ENCODE measurements at regions of chr15 and their contacts with region 1.

Region 1: DNA sequence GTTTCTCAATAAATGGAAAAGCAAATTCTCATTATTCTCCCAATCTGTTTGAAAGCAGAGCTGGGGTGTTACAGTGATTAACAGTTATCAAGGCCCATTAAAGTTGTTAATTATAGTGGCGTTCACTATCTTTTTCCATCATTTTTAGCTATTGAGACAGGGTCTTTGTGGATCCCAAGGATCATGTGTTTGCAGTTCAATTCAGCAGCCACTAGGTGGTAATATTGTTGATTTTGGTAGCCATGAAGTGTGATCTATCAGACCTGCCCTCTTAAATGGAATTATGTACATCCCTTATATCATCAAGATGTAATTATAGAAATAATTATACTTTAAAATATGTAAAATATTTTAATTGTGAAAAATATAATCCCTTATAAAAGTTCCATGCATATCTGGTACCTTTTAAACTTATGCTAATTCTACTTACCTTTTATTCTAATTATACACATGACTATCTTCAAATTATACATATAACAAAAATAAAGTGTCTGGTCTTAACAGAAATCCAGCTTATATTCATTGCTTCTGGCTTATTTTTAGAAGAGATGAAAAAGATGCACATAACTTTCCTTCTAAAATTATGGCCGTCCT is 126.4 kb downstream of the GREM1 start:
- DNase-seq: peak in 1 of 2 experiments; percentile 24
- H3K4me3 ChIP-seq: no peak overlapping the region
- H3K4me3 Mint-ChIP-seq: no peak overlapping the region
- H3K27ac Mint-ChIP-seq: no peak overlapping the region
- H3K4me1 ChIP-seq: no peaks in the 10 kb centered on the region
- H3K4me1 Mint-ChIP-seq: no peaks in the 10 kb centered on the region
- H3K27me3 ChIP-seq: no peaks in the 10 kb centered on the region
- H3K27me3 Mint-ChIP-seq: peaks cover 6% of the 10 kb centered on the region
- CTCF ChIP-seq: peak; percentile 62 to 81

Region 2: GRCh38 chr15:32683906-32684584 is 160.2 kb before region 1 on chr15:
- CTCF ChIA-PET with region 1: no interaction called
- POLR2A ChIA-PET with region 1: no interaction called
- intact Hi-C with region 1: no loop called
- DNase-seq: no peak
- H3K4me3 ChIP-seq: no peak overlapping the region
- H3K4me3 Mint-ChIP-seq: no peak overlapping the region
- H3K27ac Mint-ChIP-seq: no peak overlapping the region
- H3K4me1 ChIP-seq: no peaks in the 10 kb centered on the region
- H3K4me1 Mint-ChIP-seq: no peaks in the 10 kb centered on the region
- H3K27me3 ChIP-seq: no peaks in the 10 kb centered on the region
- H3K27me3 Mint-ChIP-seq: no peaks in the 10 kb centered on the region
- CTCF ChIP-seq: no peak

Region 3: DNA sequence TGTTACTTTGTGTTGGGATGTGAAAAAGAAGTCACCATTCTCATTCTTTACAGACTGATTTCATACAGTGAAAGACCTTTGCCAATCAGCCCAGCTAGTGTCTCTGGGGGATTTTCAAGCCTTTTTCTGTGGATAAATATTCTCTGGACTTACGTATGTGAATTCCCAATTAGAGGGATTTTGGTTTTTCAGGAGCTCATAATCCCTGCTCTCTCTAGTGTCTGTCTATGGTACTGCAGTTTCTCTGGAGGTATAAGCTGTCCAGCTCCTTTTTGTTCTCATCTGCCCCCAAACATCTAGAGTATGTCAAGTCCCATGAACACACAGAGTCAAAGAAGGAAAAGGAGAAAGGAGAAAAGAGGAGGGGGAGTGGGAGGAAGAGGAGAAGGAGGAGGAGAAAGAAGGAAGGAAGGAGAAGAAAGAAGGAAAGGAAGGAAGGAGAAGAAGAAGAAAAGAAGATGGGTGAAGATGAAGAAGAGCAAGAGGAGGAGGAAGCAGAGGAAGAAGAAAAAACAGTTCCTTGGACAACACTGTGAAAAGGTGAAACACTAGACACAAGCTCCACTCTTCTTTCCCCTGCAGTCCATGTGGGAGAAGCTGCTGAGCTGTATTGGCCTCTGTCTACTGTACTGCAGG is 92.2 kb after region 1 on chr15:
- CTCF ChIA-PET with region 1: interaction called, 25 read pairs
- POLR2A ChIA-PET with region 1: no interaction called
- intact Hi-C with region 1: loop called (anchors 2 kb)
- DNase-seq: peak in 1 of 2 experiments; percentile 24
- H3K4me3 ChIP-seq: no peak overlapping the region
- H3K4me3 Mint-ChIP-seq: no peak overlapping the region
- H3K27ac Mint-ChIP-seq: no peak overlapping the region
- H3K4me1 ChIP-seq: no peaks in the 10 kb centered on the region
- H3K4me1 Mint-ChIP-seq: no peaks in the 10 kb centered on the region
- H3K27me3 ChIP-seq: no peaks in the 10 kb centered on the region; the same call in 1 of the 2 replicates
- H3K27me3 Mint-ChIP-seq: peaks cover 7% of the 10 kb centered on the region
- CTCF ChIP-seq: peak; percentile 53 to 58

Region 4: GRCh38 chr15:32994810-32995424 is 150.7 kb after region 1 on chr15:
- CTCF ChIA-PET with region 1: no interaction called
- POLR2A ChIA-PET with region 1: no interaction called
- intact Hi-C with region 1: loop called (anchors 2 kb)
- DNase-seq: peak in 1 of 2 experiments; percentile 9
- H3K4me3 ChIP-seq: no peak overlapping the region
- H3K4me3 Mint-ChIP-seq: no peak overlapping the region
- H3K27ac Mint-ChIP-seq: no peak overlapping the region
- H3K4me1 ChIP-seq: no peaks in the 10 kb centered on the region
- H3K4me1 Mint-ChIP-seq: no peaks in the 10 kb centered on the region
- H3K27me3 ChIP-seq: no peaks in the 10 kb centered on the region
- H3K27me3 Mint-ChIP-seq: peaks cover 14% of the 10 kb centered on the region
- CTCF ChIP-seq: peak; percentile 36 to 38

Region 5: DNA sequence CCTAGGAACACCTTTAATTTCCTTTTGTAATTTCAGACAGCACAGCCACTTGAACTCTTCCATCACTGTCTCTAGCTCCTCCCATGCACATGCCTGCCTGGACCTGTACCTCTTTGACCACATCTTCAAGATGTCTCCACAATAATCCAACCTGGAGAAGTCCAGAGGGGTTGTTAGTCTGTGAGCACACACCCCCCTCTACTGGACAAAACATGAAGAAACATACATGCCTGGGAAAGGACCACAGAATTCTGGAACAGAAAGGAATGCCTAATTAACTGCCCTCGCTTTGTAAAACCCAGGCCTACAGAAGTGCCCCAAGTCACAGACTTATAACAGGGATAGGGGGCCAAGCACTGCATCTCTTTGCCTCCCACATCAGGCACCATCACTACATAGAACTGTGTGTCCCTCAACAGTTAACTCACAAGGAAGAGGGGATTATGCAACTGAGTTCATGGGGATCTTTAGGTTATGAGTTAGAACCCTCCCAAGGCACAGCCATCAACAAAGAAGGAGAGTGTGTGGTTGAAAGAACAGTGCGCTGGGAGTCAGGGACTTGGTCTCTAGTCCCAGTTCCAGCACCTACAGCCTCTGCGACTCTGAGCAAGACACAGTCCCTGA is 288.6 kb after region 1 on chr15:
- CTCF ChIA-PET with region 1: interaction called, 3 read pairs
- POLR2A ChIA-PET with region 1: no interaction called
- intact Hi-C with region 1: loop called (anchors 1 kb)
- DNase-seq: peak; percentile 51 to 64
- H3K4me3 ChIP-seq: no peak overlapping the region
- H3K4me3 Mint-ChIP-seq: no peak overlapping the region
- H3K27ac Mint-ChIP-seq: no peak overlapping the region
- H3K4me1 ChIP-seq: no peaks in the 10 kb centered on the region
- H3K4me1 Mint-ChIP-seq: no peaks in the 10 kb centered on the region
- H3K27me3 ChIP-seq: no peaks in the 10 kb centered on the region
- H3K27me3 Mint-ChIP-seq: peaks cover 11% of the 10 kb centered on the region
- CTCF ChIP-seq: peak; percentile 70 to 78